Right ventricle myocardium superior (tissue), 1 donor: ENCODE measurements at regions of chr2 and their contacts with region 1.

Region 1: GRCh38 chr2:73071360-73072133 is at the start of gene SFXN5:
- DNase-seq: peak; percentile 99
- ATAC-seq: peak; percentile 97
- total RNA-seq, gene SFXN5: 9.7 TPM

Region 2: GRCh38 chr2:72980535-72981217 is 90.9 kb before region 1 on chr2:
- intact Hi-C with region 1: loop called (anchors 5 kb)
- DNase-seq: no peak
- ATAC-seq: no peak

Region 3: DNA sequence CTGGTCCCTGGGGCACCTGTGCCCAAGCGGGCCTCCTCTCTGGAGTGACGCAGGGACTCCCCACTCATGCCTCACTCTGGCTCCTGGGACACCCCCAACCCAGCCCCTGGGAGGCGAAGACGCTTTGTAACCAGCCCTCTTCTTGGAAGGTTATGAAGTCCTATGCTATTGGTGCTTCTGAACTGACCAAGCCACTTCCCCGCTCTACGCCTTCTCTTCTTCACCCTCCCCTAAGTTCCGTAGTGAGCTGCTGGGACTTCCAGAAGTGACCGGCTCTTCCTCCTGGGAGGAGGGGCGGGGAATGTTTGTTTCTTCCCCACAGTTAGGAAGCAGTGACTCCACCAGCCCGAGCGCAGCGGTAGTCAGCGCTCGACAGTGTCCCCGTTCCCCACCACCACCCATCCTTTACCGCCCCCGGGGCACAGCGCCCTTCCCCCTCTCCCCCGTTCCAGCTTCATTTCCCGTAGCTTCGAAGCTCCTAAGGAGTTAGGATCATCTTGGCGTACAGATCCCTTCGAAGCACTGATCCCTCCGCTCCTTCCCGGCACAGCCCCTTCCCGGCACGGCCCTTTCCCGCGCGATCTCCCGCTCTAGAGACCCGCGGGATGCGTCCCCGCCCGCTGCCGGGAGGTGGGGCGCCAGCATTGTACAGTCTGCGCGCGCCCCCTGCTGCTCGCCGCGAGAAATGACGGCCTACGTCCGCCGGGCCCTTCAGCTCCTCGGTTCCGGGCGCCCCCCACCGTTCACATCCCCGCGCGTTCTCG is 105.5 kb after region 1 on chr2:
- intact Hi-C with region 1: loop called (anchors 5 kb)
- DNase-seq: peak; percentile 97
- ATAC-seq: peak; percentile 98

Region 4: GRCh38 chr2:73187549-73187948 is 116.0 kb after region 1 on chr2:
- intact Hi-C with region 1: no loop called
- DNase-seq: no peak
- ATAC-seq: no peak